Transverse colon (tissue), 4 donors: ENCODE measurements at regions of chr7 and their contacts with region 1.

Region 1: GRCh38 chr7:6057316-6058129 is 26.3 kb downstream of the ANKRD61 start:
- DNase-seq: no peak
- H3K4me3 ChIP-seq: peak overlapping the region in 3 of 4 donors; percentile 74 to 87 (median 76)
- H3K27ac ChIP-seq: peak overlapping the region; percentile 93 to 96 (median 94)
- H3K4me1 ChIP-seq: peaks cover 11 to 35% (median 18%) of the 10 kb centered on the region in 4 donors
- H3K27me3 ChIP-seq: no peaks in the 10 kb centered on the region
- CTCF ChIP-seq: no peak
- EP300 ChIP-seq: no peak
- POLR2A ChIP-seq: no peak

Region 2: DNA sequence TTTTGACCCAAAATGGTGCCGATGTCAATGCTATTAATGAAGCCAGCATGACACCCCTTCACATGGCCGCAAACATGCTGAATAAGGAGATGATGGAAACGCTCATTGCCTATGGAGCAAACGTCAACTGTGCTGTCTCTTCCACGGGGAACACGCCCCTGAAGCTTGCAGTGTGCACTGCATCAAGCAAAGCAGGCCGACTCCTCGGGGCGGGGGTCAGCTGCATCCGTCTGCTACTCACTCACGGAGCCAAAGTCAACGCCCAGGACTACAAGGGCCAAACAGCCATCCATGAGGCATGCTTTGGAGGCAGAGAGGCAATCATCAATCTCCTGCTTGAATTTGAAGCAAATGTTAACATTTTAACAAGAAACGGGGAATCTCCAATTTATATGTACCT is 21.8 kb before region 1 on chr7:
- in situ Hi-C with region 1: no loop called
- intact Hi-C with region 1: loop called (anchors 2 kb)
- DNase-seq: no peak
- H3K4me3 ChIP-seq: no peak overlapping the region
- H3K27ac ChIP-seq: no peak overlapping the region
- H3K4me1 ChIP-seq: no peaks in the 10 kb centered on the region
- H3K27me3 ChIP-seq: no peaks in the 10 kb centered on the region
- CTCF ChIP-seq: no peak
- EP300 ChIP-seq: no peak
- POLR2A ChIP-seq: no peak

Region 3: GRCh38 chr7:6106140-6106904 is 48.8 kb after region 1 on chr7:
- in situ Hi-C with region 1: no loop called
- intact Hi-C with region 1: no loop called
- DNase-seq: peak; percentile 28
- H3K4me3 ChIP-seq: peak overlapping the region; percentile 65 to 94 (median 72)
- H3K27ac ChIP-seq: peak overlapping the region; percentile 92 to 100 (median 95)
- H3K4me1 ChIP-seq: peaks cover 9 to 23% (median 17%) of the 10 kb centered on the region in 4 donors
- H3K27me3 ChIP-seq: no peaks in the 10 kb centered on the region
- CTCF ChIP-seq: peak in 4 of 5 experiments; percentile 19 to 31 (median 23)
- EP300 ChIP-seq: no peak
- POLR2A ChIP-seq: no peak